ENCODE measurements at regions of chr16 and their contacts with region 1.

Region 1: DNA sequence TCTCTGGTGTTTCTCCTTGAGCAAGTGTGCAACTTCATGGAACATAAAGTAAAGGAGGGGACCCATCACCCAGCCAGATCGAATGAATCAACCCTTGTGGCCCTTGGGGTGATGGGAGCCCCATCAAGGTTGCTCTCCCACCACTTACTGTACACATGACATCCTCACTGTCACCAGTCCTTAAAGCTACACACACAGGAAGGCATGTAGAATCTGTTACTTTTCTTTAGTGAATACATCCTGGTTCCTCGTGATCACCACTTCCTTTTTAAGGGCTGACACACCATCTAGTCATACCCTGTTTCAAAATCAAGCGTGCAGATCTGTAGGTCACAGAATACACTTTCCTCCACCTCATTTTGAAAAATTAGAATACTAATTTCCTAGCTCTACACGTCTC is 22.6 kb upstream of the MPHOSPH6 start:
- DNase-seq: no peak
- H3K4me3 ChIP-seq: no peak overlapping the region
- H3K27ac ChIP-seq: no peak overlapping the region
- H3K4me1 ChIP-seq: no peaks in the 10 kb centered on the region
- H3K27me3 ChIP-seq: no peaks in the 10 kb centered on the region
- CTCF ChIP-seq: no peak
- POLR2A ChIP-seq: no peak

Region 2: DNA sequence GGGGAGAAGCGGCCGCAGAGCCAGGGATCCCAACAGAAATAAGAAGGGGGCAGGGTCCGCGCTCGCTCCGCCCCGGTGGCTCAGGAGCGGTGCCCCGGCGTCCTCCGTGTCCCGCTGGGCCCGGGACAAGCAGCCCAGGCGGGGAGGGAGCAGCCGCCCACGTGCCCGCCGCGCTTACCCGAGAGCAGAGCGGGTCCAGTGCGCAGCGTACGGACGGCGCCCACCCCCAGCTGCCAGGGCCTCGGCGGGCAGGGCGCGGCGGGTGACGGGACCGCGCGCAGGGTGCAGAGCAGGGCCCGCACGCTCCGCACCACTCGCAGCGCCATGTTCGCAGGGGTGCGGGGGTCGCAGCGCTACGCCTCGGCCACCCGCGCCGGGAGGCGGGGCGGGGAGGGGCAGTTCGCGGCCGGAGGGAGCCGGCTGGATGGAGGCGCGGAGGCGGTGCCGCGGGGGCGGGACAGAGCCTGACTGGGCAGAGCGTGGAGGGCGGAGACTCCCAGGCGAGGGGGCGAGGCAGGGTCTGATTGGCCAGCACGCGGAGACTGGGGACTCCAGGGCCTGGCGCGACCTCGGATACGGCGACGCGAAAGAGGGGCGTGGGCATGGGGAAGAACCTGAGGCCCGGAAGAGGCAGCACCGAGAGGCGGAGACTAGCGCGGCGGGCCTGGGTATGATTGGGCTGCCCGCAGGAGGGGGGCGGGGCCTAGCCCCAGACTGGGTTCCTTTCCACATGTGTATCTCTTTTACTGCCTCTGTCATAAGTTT is 1096.5 kb before region 1 on chr16 and contains the start of gene GCSH:
- intact Hi-C with region 1: no loop called
- DNase-seq: peak; percentile 100
- H3K4me3 ChIP-seq: peak within 1 kb of the TSS; percentile 37 to 62 (median 61)
- H3K27ac ChIP-seq: peak within 1 kb of the TSS; percentile 76 to 87 (median 87)
- H3K4me1 ChIP-seq: peaks cover 23 to 29% of the 10 kb centered on the region in 2 donors
- H3K27me3 ChIP-seq: no peaks in the 10 kb centered on the region
- CTCF ChIP-seq: no peak
- POLR2A ChIP-seq: peak in 1 of 2 donors; percentile 76
- total RNA-seq, gene GCSH: 48.8 to 82.1 (median 60.7) TPM

Region 3: GRCh38 chr16:82317411-82318167 is 124.9 kb after region 1 on chr16:
- intact Hi-C with region 1: loop called (anchors 5 kb)
- DNase-seq: no peak
- H3K4me3 ChIP-seq: no peak overlapping the region
- H3K27ac ChIP-seq: no peak overlapping the region
- H3K4me1 ChIP-seq: no peaks in the 10 kb centered on the region
- H3K27me3 ChIP-seq: no peaks in the 10 kb centered on the region
- CTCF ChIP-seq: no peak
- POLR2A ChIP-seq: no peak